ENCODE measurements at regions of chr6 and their contacts with region 1.

Region 1: DNA sequence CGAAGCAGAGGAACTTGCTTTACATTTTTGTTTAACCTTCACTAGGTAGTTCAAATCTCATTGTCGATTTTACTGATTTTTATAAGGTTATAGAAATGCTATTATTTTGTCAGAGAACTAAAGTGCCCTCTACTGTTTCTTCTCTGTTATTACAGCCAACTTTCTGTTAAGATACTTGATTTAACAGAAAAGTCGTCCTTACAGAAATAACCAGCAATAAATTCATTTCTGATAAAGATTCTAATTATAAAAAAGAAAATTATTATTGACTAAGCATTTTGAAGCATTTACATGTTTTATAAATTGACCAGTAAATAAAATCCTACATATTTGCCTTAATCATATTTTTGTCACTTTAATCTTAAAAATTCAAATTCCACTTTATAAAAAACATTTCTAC is 60.8 kb downstream of the OGFRL1 start:
- DNase-seq: no peak
- ATAC-seq: peak in 3 of 4 donors; percentile 30 to 66 (median 62)
- H3K4me3 ChIP-seq: no peak overlapping the region
- H3K27ac ChIP-seq: no peak overlapping the region
- H3K4me1 ChIP-seq: peaks cover 0 to 7% (median 7%) of the 10 kb centered on the region in 3 donors
- H3K27me3 ChIP-seq: no peaks in the 10 kb centered on the region
- CTCF ChIP-seq: peak; percentile 22 to 57 (median 51)

Region 2: GRCh38 chr6:71187141-71187540 is 162.3 kb before region 1 on chr6:
- intact Hi-C with region 1: loop called in 1 of 3 experiments (anchors 5 kb)
- DNase-seq: no peak
- ATAC-seq: peak in 1 of 4 donors; percentile 57
- H3K4me3 ChIP-seq: no peak overlapping the region
- H3K27ac ChIP-seq: no peak overlapping the region
- H3K4me1 ChIP-seq: no peaks in the 10 kb centered on the region
- H3K27me3 ChIP-seq: no peaks in the 10 kb centered on the region
- CTCF ChIP-seq: no peak

Region 3: GRCh38 chr6:71205336-71205956 is 143.9 kb before region 1 on chr6:
- intact Hi-C with region 1: loop called in 1 of 3 experiments (anchors 10 kb)
- DNase-seq: no peak
- ATAC-seq: no peak
- H3K4me3 ChIP-seq: no peak overlapping the region
- H3K27ac ChIP-seq: no peak overlapping the region
- H3K4me1 ChIP-seq: no peaks in the 10 kb centered on the region
- H3K27me3 ChIP-seq: no peaks in the 10 kb centered on the region
- CTCF ChIP-seq: no peak

Region 4: DNA sequence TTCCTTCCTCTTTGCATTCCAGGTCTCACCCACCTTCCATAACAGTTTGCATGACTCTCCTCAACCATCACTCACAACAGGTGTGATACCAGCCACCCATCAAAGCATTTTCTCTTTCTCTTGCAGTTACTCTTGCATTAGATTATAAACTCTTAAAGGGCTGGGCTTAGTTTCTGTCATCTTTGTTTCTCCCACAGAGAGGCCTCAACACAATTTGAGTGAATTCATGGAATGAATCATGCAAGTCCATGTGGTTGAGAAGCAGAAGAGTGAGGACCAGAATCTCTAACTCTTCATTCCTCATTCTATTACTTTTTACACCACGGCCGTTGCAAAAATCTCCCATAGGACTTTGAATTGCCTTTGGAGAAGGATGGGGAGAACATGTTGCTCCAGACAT is 29.4 kb before region 1 on chr6:
- intact Hi-C with region 1: no loop called
- DNase-seq: no peak
- ATAC-seq: no peak
- H3K4me3 ChIP-seq: no peak overlapping the region
- H3K27ac ChIP-seq: no peak overlapping the region
- H3K4me1 ChIP-seq: peaks cover 0 to 7% (median 0%) of the 10 kb centered on the region in 3 donors
- H3K27me3 ChIP-seq: no peaks in the 10 kb centered on the region
- CTCF ChIP-seq: no peak